ENCODE measurements at regions of chr2 and their contacts with region 1.

Region 1: GRCh38 chr2:233061591-233062450 is 1.7 kb downstream of the INPP5D start:
- DNase-seq: peak; percentile 43
- ATAC-seq: peak; percentile 38
- H3K4me3 Mint-ChIP-seq: peak overlapping the region; percentile 96
- H3K27ac Mint-ChIP-seq: peak overlapping the region; percentile 87
- H3K4me1 Mint-ChIP-seq: peaks cover 64% of the 10 kb centered on the region
- H3K27me3 Mint-ChIP-seq: no peaks in the 10 kb centered on the region
- CTCF ChIP-seq: no peak

Region 2: DNA sequence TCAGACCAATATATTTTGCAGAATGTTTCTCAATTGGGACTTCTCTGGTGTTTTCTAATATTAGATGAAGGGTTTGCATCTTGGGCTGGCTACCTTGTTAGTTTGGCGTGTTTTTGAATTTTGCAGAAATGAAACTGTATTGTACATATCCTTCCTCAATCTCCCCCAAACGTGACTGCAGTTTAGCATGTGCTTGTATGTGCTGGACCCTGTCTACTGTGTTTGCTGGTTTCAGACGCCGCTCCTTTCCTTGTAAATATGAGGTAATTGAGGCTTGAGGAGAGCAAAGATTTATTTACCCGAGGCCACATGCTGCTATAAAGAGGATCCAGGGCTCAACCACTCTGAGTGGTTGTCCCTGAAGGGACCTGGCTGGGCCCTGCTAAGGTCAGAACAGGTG is 106.0 kb before region 1 on chr2:
- CTCF ChIA-PET with region 1: interaction called, 4 read pairs
- POLR2A ChIA-PET with region 1: no interaction called
- intact Hi-C with region 1: loop called (anchors 5 kb)
- DNase-seq: no peak
- ATAC-seq: peak; percentile 84
- H3K4me3 Mint-ChIP-seq: peak overlapping the region; percentile 44
- H3K27ac Mint-ChIP-seq: peak overlapping the region; percentile 74
- H3K4me1 Mint-ChIP-seq: peaks cover 48% of the 10 kb centered on the region
- H3K27me3 Mint-ChIP-seq: no peaks in the 10 kb centered on the region
- CTCF ChIP-seq: no peak

Region 3: GRCh38 chr2:233021771-233022170 is 40.0 kb before region 1 on chr2:
- CTCF ChIA-PET with region 1: no interaction called
- POLR2A ChIA-PET with region 1: no interaction called
- intact Hi-C with region 1: no loop called
- DNase-seq: no peak
- ATAC-seq: no peak
- H3K4me3 Mint-ChIP-seq: no peak overlapping the region
- H3K27ac Mint-ChIP-seq: no peak overlapping the region
- H3K4me1 Mint-ChIP-seq: no peaks in the 10 kb centered on the region
- H3K27me3 Mint-ChIP-seq: no peaks in the 10 kb centered on the region
- CTCF ChIP-seq: no peak

Region 4: DNA sequence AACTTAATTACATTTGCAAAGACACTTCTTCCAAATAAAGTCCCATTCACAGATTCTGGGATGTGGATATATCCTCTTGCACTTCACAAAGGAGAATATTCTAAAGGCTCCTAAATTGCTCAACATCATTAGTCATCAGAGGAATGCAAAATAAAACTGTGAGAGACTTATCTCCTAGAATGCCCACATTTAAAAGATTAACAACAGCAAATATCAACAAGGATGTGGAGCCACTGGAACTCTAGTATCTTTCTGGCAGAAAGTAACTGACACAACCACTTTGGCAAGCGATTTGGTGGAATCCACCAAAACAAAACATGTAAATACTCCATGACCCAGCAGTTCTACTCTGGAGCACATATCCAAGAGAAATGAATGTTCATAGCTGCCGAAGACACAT is 24.7 kb before region 1 on chr2:
- CTCF ChIA-PET with region 1: no interaction called
- POLR2A ChIA-PET with region 1: no interaction called
- intact Hi-C with region 1: no loop called
- DNase-seq: no peak
- ATAC-seq: no peak
- H3K4me3 Mint-ChIP-seq: no peak overlapping the region
- H3K27ac Mint-ChIP-seq: no peak overlapping the region
- H3K4me1 Mint-ChIP-seq: no peaks in the 10 kb centered on the region
- H3K27me3 Mint-ChIP-seq: peaks cover 2% of the 10 kb centered on the region
- CTCF ChIP-seq: no peak

Region 5: GRCh38 chr2:233084488-233084887 is 22.7 kb after region 1 on chr2:
- CTCF ChIA-PET with region 1: interaction called, 23 read pairs
- POLR2A ChIA-PET with region 1: interaction called, 270 read pairs
- intact Hi-C with region 1: loop called (anchors 1 kb)
- DNase-seq: no peak
- ATAC-seq: no peak
- H3K4me3 Mint-ChIP-seq: peak overlapping the region; percentile 75
- H3K27ac Mint-ChIP-seq: peak overlapping the region; percentile 98
- H3K4me1 Mint-ChIP-seq: peaks cover 97% of the 10 kb centered on the region
- H3K27me3 Mint-ChIP-seq: no peaks in the 10 kb centered on the region
- CTCF ChIP-seq: no peak

Region 6: GRCh38 chr2:233100192-233100998 is 38.6 kb after region 1 on chr2:
- CTCF ChIA-PET with region 1: interaction called, 22 read pairs
- POLR2A ChIA-PET with region 1: interaction called, 308 read pairs
- intact Hi-C with region 1: loop called (anchors 1 kb)
- DNase-seq: peak; percentile 76
- ATAC-seq: peak; percentile 85
- H3K4me3 Mint-ChIP-seq: peak overlapping the region; percentile 79
- H3K27ac Mint-ChIP-seq: peak overlapping the region; percentile 98
- H3K4me1 Mint-ChIP-seq: peaks cover 90% of the 10 kb centered on the region
- H3K27me3 Mint-ChIP-seq: no peaks in the 10 kb centered on the region
- CTCF ChIP-seq: no peak

Region 7: DNA sequence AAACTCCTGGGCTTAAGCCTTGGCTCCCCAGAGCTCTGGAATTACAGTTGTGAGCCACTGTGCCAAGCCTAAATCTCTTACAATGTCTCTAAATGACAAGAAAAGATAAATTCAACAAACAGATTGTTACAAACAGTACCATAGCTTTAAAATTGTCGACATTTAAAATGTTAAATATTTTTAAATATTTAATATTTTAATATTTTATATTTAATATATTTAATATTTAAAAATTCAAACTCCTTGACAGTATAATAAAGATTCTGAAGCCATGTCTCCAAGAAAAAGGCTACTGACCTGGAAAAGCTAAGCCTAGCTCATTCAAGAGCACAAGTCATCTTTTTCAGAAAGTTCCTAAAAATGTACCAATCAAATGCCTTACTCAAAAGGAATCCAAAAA is 73.6 kb after region 1 on chr2:
- CTCF ChIA-PET with region 1: interaction called, 3 read pairs
- POLR2A ChIA-PET with region 1: interaction called, 10 read pairs
- intact Hi-C with region 1: no loop called
- DNase-seq: no peak
- ATAC-seq: no peak
- H3K4me3 Mint-ChIP-seq: no peak overlapping the region
- H3K27ac Mint-ChIP-seq: no peak overlapping the region
- H3K4me1 Mint-ChIP-seq: peaks cover 3% of the 10 kb centered on the region
- H3K27me3 Mint-ChIP-seq: no peaks in the 10 kb centered on the region
- CTCF ChIP-seq: no peak

Region 8: DNA sequence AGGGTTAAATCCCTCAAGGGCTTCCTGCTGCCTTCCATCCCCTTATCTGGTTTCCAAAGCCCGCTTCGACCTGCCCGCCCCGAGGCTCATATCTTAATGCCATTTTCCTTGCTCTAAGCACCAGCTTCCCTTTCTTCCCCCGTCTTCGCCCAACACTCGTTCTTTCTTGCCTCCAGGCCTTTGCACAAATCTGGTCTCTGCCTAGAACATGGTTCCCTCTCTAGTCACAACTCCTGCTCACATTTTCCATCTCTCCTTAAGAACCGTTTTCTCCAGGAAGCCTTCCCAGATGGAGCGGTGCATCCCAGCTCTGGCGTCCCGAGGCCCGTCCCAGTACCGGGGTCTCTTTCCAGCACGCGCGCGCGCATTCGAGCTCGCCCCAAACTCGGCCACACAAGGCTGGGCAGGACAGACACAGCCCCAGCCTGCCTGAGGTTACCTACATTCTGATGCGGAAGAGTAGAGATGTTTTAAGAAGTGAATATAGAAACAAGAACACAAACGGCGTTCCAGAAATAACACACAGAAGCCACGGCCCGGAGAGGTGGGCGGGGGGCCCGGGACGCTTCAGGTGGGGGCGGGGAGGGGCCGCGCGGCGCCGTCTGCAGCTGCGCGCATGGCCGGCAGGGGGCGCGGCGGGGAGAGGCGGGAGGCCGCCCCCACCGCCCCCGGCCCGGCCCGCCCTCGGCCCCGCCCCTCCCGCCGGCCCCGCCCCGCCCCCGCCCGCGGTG is 292.1 kb after region 1 on chr2 and contains the start of gene DGKD:
- CTCF ChIA-PET with region 1: no interaction called
- POLR2A ChIA-PET with region 1: interaction called, 7 read pairs
- intact Hi-C with region 1: loop called (anchors 5 kb)
- DNase-seq: peak; percentile 74
- ATAC-seq: peak; percentile 78
- H3K4me3 Mint-ChIP-seq: peak within 1 kb of the TSS; percentile 93
- H3K27ac Mint-ChIP-seq: peak within 1 kb of the TSS; percentile 100
- H3K4me1 Mint-ChIP-seq: peaks cover 88% of the 10 kb centered on the region
- H3K27me3 Mint-ChIP-seq: no peaks in the 10 kb centered on the region
- CTCF ChIP-seq: no peak
- total RNA-seq, gene DGKD: 140 and 188 TPM in 2 replicates

Region 9: GRCh38 chr2:233418761-233419625 is 357.2 kb after region 1 on chr2:
- CTCF ChIA-PET with region 1: no interaction called
- POLR2A ChIA-PET with region 1: interaction called, 3 read pairs
- intact Hi-C with region 1: loop called (anchors 5 kb)
- DNase-seq: peak; percentile 56
- ATAC-seq: peak; percentile 69
- H3K4me3 Mint-ChIP-seq: peak overlapping the region; percentile 87
- H3K27ac Mint-ChIP-seq: peak overlapping the region; percentile 97
- H3K4me1 Mint-ChIP-seq: peaks cover 99% of the 10 kb centered on the region
- H3K27me3 Mint-ChIP-seq: no peaks in the 10 kb centered on the region
- CTCF ChIP-seq: no peak

Measured in activated B cell treated with CpG ODN at 0.5 μM for 24 hours (primary cell).